ENCODE measurements at regions of chr2 and their contacts with region 1.

Region 1: GRCh38 chr2:127067620-127068350 is 39.2 kb downstream of the BIN1 start:
- DNase-seq: peak; percentile 81
- ATAC-seq: peak; percentile 61
- H3K4me3 Mint-ChIP-seq: no peak overlapping the region
- H3K27ac Mint-ChIP-seq: peak overlapping the region; percentile 11
- H3K4me1 Mint-ChIP-seq: peaks cover 31% of the 10 kb centered on the region
- H3K27me3 Mint-ChIP-seq: no peaks in the 10 kb centered on the region

Region 2: GRCh38 chr2:127080938-127081755 is 13.4 kb after region 1 on chr2:
- CTCF ChIA-PET with region 1: interaction called, 28 read pairs
- POLR2A ChIA-PET with region 1: interaction called, 9 read pairs
- DNase-seq: peak; percentile 68
- ATAC-seq: peak; percentile 45
- H3K4me3 Mint-ChIP-seq: peak overlapping the region; percentile 92
- H3K27ac Mint-ChIP-seq: peak overlapping the region; percentile 97
- H3K4me1 Mint-ChIP-seq: peaks cover 82% of the 10 kb centered on the region
- H3K27me3 Mint-ChIP-seq: no peaks in the 10 kb centered on the region

Region 3: GRCh38 chr2:127661949-127662510 is 594.2 kb after region 1 on chr2:
- CTCF ChIA-PET with region 1: no interaction called
- POLR2A ChIA-PET with region 1: no interaction called
- DNase-seq: no peak
- ATAC-seq: no peak
- H3K4me3 Mint-ChIP-seq: no peak overlapping the region
- H3K27ac Mint-ChIP-seq: no peak overlapping the region
- H3K4me1 Mint-ChIP-seq: peaks cover 6% of the 10 kb centered on the region
- H3K27me3 Mint-ChIP-seq: peaks cover 43% of the 10 kb centered on the region